Right ventricle myocardium inferior (tissue), 1 donor: ENCODE measurements at regions of chr9 and their contacts with region 1.

Region 1: DNA sequence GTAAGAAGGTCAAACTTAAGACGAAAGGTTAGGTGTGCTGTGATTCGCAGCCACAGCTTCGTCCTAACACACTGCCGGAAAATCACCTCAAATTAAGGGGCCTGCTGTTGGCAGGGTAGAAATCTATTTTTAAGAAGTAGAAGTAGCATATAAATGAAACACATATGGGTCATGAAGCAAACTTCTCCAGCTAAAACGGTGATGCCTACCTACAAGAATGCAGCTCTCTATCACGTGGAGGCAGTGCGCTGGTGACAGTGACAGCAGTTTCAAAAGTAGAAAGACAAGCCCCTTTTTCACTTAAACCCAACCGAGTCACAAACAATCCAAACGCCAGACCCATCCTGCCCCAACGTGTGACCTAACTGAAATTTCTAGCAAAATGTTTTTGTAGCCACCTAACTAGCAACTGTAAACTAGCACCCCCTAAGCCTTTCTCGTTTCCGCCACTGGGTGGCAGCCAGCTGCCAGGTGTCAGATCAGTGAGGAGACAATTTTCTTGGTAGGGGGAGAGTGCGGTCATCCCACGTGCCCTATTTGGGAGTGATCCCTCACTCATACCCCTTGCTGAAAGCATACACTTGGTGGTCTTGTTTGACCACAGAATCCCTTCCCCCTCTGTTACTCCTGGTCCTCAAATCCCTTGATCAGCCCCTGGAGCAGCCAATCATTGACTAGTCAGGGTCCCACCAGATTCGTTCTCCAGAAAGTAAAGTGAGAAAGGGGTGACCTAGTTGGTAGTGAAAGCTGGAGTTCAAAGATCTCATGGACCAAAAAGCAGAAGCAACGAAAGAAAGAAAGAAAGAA is 71.8 kb upstream of the MAMDC2 start:
- DNase-seq: peak; percentile 79
- ATAC-seq: peak; percentile 81

Region 2: DNA sequence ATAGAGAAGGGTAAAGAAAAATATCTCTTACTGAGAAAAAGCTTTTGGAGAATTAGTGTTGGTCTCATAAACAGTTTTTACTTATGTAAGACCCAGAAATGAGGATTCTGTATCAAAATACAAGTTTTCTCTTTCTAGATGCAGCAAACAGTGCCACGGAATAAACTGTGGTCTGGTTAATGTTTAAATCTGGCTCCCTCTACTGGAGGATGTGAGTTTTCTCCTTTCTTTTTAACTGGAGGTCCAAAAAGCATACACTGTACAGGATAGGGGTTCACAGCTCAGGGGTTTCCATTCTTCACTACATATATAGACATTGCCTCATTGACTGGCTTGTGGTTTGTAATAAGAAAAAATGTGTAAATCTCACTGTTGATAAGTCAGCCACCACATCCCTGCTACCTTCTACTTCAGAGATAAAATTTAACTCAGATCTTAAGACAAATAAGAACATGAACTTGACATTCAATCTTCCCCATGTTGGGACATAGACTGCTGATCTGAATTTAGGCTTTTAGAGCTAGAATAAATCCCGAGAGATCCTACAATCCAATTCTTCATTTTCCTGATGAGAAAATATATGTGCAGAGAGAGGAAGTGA is 52.3 kb before region 1 on chr9:
- intact Hi-C with region 1: no loop called
- DNase-seq: no peak
- ATAC-seq: peak; percentile 77

Region 3: DNA sequence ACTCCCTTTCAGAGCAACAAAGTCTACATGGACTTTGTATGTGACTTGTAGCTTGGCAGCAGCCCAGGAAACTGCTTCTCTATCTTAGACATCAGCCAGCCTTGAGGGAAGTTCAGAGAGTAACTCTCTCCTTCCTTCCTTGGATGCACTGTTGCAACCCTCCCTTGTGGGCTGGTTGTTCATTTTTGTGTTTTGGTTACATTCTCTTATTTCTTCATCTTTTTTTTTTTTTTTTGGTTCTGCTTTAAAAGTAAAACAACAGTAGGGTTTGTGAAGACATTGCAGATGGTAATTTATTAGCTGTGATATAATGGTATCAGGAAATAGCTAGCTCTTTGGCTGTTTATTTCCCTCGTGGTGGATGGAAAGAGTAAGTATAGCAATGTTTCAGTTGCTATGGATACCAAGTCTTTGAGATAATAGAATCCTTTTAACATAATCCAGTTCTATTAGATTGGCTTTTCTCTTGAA is 26.1 kb before region 1 on chr9:
- intact Hi-C with region 1: no loop called
- DNase-seq: peak; percentile 65
- ATAC-seq: peak; percentile 78

Region 4: DNA sequence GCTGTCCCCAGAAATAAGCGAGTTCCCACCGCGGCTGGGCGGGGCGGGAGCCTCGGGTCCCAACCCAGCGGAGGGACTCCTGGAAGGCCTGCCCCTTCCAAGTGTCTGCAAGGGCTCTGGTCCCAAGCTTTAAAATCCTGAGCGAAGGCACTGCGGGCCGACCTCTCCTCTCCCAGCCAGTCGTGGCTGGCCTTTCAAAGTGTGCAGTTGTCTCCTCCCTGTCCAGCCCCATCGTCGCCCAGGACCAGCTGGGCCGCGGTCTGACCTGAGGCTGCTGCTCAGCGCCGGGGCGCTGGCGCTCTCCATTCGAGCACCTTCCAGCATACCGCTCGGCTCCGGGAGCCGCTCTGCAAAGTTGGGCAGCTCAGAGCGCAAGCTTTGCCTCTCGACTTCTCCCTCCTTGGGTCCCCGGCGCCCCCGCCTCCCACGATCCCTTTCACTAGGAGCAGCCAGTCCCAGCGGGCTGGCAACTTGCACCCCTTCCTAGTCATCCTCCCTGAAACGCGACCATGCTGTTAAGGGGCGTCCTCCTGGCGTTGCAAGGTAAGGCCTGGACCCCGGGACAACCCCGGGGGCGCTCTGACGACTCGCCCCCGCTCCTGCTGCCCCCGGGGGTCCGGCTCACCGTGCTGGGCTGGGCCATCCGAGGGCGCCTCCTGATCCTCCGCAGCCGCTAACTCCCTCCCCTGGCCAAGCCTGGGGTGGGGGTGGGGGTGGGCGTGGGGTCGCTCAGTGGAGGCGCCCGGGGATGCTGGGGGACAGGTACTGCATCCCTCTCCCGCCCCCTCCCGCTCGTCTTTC is 72.0 kb after region 1 on chr9 and contains the start of gene MAMDC2:
- intact Hi-C with region 1: loop called (anchors 10 kb)
- DNase-seq: peak; percentile 83
- ATAC-seq: peak; percentile 76
- total RNA-seq, gene MAMDC2: 10.8 TPM

Region 5: DNA sequence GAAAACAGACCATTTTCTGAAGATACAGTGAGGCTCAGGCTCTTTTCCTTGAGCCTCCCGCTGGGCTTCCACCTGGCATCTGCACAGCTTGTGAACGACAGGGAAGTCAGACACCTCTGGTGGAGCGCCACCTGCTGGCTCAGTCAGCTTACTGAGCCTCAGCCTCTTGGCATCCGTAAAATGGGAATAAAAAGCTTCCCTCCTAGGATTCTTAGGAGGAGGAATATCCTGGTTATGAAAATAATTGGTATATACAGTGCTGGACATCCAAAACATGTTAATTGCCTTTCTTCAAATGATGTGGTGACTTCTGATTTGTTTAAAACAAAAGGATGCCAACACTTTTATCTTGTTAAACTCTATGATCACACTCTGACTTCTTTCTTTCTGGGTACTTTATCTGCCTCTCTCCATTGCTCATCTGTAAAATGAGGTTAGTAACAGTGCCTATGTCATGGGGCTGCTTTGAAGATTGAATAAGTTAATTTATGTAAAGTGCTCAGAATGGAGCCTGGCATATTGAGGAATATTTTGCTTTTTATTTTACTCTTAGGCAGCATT is 139.3 kb after region 1 on chr9:
- intact Hi-C with region 1: loop called (anchors 1 kb)
- DNase-seq: peak; percentile 90
- ATAC-seq: peak; percentile 73